Activated naive CD4-positive, alpha-beta T cell treated with anti-CD3 and anti-CD28 coated beads, Interleukin-2, amount 10 ng/mL, durations not matched to agents 7 days and 5 days (primary cell): ENCODE measurements at regions of chr14 and their contacts with region 1.

Region 1: GRCh38 chr14:21014761-21015190 is 10.1 kb downstream of the NDRG2 start:
- DNase-seq: peak; percentile 86
- H3K4me3 Mint-ChIP-seq: no peak overlapping the region
- H3K27ac Mint-ChIP-seq: no peak overlapping the region
- H3K4me1 Mint-ChIP-seq: no peaks in the 10 kb centered on the region
- H3K27me3 Mint-ChIP-seq: peaks cover 37% of the 10 kb centered on the region

Region 2: DNA sequence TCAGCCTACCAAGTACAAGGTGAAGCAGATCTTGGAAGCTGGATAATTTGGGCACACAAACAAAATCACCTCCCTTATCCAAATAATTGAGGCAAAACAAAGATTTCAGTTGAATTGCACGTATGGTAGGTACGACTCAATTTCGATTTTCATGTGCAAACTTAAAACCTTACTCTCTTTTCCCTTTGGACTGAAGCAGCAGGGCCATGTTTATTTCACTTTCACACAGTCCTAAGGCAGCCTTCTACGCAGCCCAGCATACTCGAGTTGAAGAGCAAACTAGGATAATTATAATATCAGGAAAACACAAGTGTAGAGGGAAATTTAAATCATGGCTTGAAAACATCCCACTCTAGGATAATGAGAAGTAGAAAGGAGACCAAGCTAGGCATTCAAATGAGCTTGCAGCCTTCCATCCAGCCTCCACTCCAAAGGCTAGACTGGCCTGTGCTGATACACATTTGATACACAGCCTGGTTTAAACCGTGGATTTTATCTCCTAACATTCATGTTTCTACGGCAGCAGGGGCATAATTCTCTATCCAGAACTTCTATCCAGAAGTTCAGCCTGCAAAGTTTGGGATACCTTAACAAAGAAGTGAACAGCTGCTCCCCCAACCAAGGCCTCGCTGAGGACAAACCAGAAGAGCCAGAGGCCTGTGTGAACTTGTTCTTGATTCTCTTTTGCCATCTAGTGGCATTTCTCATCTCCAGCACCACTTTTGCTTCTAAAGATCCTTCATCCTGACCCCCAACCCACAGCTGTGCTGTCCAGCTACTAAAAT is 25.0 kb after region 1 on chr14:
- CTCF ChIA-PET with region 1: interaction called, 174 read pairs
- DNase-seq: peak; percentile 36
- H3K4me3 Mint-ChIP-seq: no peak overlapping the region
- H3K27ac Mint-ChIP-seq: no peak overlapping the region
- H3K4me1 Mint-ChIP-seq: peaks cover 2% of the 10 kb centered on the region
- H3K27me3 Mint-ChIP-seq: peaks cover 56% of the 10 kb centered on the region

Region 3: DNA sequence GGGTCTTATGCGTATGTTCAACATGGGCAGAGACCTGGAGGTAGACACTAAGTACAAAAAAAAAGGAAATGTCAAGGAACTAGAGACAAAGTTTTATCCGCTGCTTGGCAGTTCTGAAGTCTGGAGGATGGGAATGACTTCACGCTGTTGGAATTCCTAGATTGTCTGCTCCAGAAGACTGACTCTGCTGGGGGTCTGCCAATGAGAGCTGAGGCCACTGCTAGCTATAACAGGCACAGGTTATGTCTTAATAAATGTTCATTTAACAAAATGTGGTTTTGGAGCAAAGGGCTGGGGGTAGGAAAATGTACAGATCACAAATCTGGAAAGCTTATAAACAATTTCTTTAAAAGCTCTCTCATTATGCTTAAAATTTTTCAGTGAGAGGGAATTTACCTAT is 48.7 kb after region 1 on chr14:
- CTCF ChIA-PET with region 1: interaction called, 20 read pairs
- DNase-seq: no peak
- H3K4me3 Mint-ChIP-seq: no peak overlapping the region
- H3K27ac Mint-ChIP-seq: no peak overlapping the region
- H3K4me1 Mint-ChIP-seq: peaks cover 2% of the 10 kb centered on the region
- H3K27me3 Mint-ChIP-seq: peaks cover 66% of the 10 kb centered on the region

Region 4: DNA sequence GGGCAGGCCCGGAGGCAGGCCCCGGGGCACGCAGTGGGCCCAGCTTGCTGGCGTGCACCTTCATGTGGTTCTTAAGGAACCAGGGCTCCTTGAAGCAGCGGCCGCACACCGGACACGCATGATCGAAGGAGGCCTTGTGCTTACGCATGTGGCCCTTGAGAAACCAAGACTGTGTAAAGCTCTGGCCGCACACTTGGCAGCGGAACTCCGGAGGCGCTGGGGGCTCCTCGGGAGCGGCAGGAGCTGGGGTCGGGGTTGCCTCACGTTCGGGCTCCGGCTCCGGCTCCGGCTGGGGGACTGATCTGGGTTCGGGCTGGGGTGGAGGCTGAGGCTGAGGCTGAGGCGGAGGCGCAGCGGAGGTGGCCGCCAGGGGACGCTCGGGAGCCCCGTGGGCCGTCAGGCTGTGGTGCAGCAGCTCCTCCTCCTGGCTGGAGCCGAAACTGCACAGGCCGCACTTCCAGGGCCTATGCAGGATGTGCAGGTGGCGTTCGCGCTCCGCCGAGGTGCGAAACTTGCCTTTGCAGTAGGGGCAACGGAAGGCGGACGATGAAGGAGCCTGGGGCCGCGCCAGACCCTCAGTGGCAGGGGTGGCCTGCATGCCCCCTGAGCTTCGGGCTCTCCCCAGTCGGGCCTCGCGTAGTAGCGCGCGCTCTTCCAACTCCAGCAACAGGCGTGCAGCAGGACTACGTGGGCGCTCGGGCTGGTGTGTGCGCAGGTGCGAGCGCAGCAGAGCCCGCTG is 77.7 kb after region 1 on chr14:
- CTCF ChIA-PET with region 1: interaction called, 102 read pairs
- DNase-seq: peak; percentile 92
- H3K4me3 Mint-ChIP-seq: no peak overlapping the region
- H3K27ac Mint-ChIP-seq: peak overlapping the region; percentile 54
- H3K4me1 Mint-ChIP-seq: peaks cover 19% of the 10 kb centered on the region
- H3K27me3 Mint-ChIP-seq: peaks cover 44% of the 10 kb centered on the region